ENCODE measurements at regions of chr2 and their contacts with region 1.

Region 1: DNA sequence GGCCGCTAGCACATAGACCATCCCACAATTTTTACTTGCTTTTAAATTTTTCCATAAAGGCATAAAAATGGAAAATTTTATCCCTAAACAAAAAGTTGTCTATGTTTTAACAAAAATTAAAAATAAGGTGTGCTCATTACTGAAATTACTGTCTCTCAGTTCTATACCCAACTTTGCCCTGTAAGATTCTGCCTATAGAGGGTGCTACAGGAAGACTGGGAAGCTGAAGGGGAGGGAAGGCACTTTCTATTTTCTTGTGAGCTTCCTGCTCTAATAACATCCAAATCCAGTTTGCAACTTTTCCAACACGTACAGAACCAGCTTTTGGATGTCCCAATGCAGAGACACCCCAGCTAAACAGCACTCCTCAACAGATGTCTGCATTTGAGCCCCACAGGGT is 666.9 kb downstream of the PLCL1 start:
- DNase-seq: no peak
- H3K4me3 ChIP-seq: no peak overlapping the region
- H3K27ac ChIP-seq: no peak overlapping the region
- H3K4me1 ChIP-seq: no peaks in the 10 kb centered on the region
- H3K27me3 ChIP-seq: no peaks in the 10 kb centered on the region
- CTCF ChIP-seq: peak; percentile 23 to 56

Region 2: DNA sequence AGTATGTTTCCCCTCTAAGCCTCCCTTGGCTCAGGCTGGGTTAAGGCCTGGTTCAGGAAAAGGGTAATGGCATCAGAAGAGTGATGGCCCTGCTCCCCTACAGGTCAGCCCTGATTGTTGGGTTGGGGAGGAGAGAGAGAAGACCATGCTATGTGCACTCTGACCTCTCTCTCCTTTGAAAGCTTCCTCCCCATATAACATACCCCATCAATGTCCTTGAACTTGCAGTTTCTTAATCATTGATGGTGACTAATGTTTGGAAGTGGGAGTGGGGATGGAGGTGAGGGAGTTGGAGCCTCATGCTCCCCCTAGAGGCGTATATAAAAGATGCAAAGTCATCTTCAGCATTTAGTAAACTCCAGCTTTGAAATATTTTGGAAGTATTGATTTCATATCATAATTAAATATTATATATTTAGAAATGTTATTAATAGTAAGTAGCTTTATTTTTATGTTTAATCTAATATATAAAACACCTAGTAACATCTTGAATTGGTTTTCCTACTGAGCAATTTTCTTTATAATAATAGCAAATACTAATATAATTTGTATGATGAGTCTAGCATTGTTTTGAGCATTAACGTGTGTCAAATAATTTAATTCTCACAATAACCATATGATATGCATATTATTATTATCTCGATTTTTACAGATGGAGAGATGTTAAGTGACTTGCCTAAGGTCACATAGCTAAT is 658.1 kb before region 1 on chr2:
- CTCF ChIA-PET with region 1: interaction called, 10 read pairs
- dilution Hi-C with region 1: no loop called
- in situ Hi-C with region 1: no loop called
- intact Hi-C with region 1: no loop called
- DNase-seq: peak; percentile 41
- H3K4me3 ChIP-seq: no peak overlapping the region
- H3K27ac ChIP-seq: no peak overlapping the region
- H3K4me1 ChIP-seq: no peaks in the 10 kb centered on the region
- H3K27me3 ChIP-seq: no peaks in the 10 kb centered on the region
- CTCF ChIP-seq: peak; percentile 64 to 70

Region 3: DNA sequence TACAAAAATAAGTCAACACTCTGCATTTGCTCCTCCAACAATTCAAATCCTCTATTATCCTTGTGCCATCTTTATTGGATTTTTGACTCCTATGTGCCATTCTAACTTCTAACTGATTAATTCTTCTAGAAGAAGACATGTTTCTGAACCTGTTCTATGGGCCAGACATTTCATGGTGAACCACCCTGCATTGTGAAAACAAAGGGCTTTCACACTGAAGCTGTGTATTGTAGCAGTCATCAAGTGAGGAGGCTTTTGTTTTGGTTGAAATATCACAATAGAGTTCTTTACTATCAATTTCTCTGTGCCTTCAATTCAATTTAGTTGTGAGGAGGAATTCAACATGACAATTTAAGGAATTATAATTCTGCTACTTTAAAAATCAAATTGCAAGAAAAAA is 309.0 kb before region 1 on chr2:
- CTCF ChIA-PET with region 1: no interaction called
- dilution Hi-C with region 1: no loop called
- in situ Hi-C with region 1: no loop called
- intact Hi-C with region 1: no loop called
- DNase-seq: no peak
- H3K4me3 ChIP-seq: no peak overlapping the region
- H3K27ac ChIP-seq: no peak overlapping the region
- H3K4me1 ChIP-seq: no peaks in the 10 kb centered on the region
- H3K27me3 ChIP-seq: no peaks in the 10 kb centered on the region
- CTCF ChIP-seq: no peak

Region 4: DNA sequence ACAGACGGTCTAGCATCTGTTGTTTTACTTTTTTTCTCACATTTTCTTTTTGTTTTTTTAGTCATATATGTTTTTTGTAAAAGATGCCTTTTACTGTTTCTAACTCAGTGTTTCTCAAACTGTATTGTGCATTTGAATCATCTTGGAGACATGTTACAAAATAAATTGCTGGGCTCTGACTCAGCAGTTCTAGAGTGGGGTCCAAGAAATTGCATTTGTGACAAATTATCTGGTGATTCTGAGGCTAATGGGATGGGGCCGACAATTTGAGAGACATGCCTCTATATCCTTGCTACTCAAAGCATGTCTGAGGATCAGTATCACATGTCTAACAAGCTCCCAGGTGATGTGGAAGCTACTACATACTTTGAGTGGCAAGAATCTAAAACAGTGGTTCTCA is 188.1 kb before region 1 on chr2:
- CTCF ChIA-PET with region 1: no interaction called
- dilution Hi-C with region 1: no loop called
- in situ Hi-C with region 1: no loop called
- intact Hi-C with region 1: no loop called
- DNase-seq: no peak
- H3K4me3 ChIP-seq: no peak overlapping the region
- H3K27ac ChIP-seq: no peak overlapping the region
- H3K4me1 ChIP-seq: no peaks in the 10 kb centered on the region
- H3K27me3 ChIP-seq: peaks cover 2% of the 10 kb centered on the region
- CTCF ChIP-seq: no peak

Region 5: DNA sequence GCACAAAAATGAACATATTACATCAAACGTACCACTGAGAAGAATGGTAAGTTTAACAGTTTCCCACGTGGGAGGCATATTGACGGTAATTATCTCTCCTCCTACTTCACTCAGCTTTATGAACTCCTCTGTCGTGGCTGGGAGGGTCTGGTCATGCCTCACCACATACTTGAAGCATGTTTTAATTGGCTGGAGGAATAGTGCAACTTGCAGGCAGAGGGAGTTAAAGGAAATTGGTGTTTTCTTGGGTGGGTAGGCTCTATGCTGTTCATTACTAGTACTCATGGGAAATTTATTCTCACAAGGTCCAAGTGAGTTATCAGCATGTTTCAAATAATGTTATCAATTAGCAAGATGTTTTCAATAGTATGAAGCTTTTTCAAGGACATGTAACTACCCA is 100.1 kb after region 1 on chr2:
- CTCF ChIA-PET with region 1: no interaction called
- dilution Hi-C with region 1: no loop called
- in situ Hi-C with region 1: no loop called
- intact Hi-C with region 1: no loop called
- DNase-seq: no peak
- H3K4me3 ChIP-seq: no peak overlapping the region
- H3K27ac ChIP-seq: no peak overlapping the region
- H3K4me1 ChIP-seq: no peaks in the 10 kb centered on the region
- H3K27me3 ChIP-seq: no peaks in the 10 kb centered on the region
- CTCF ChIP-seq: no peak